ENCODE measurements at regions of chr2 and their contacts with region 1.

Region 1: GRCh38 chr2:184346338-184346862 is 251.9 kb upstream of the ZNF804A start:
- DNase-seq: no peak
- H3K4me3 ChIP-seq: no peak overlapping the region
- H3K27ac ChIP-seq: no peak overlapping the region
- H3K4me1 ChIP-seq: no peaks in the 10 kb centered on the region
- H3K27me3 ChIP-seq: no peaks in the 10 kb centered on the region
- CTCF ChIP-seq: no peak
- EP300 ChIP-seq: no peak
- POLR2A ChIP-seq: no peak

Region 2: GRCh38 chr2:183207110-183207509 is 1139.3 kb before region 1 on chr2:
- in situ Hi-C with region 1: no loop called
- intact Hi-C with region 1: loop called (anchors 5 kb)
- DNase-seq: no peak
- H3K4me3 ChIP-seq: no peak overlapping the region
- H3K27ac ChIP-seq: no peak overlapping the region
- H3K4me1 ChIP-seq: no peaks in the 10 kb centered on the region
- H3K27me3 ChIP-seq: no peaks in the 10 kb centered on the region
- CTCF ChIP-seq: no peak
- EP300 ChIP-seq: no peak
- POLR2A ChIP-seq: no peak

Region 3: GRCh38 chr2:185108588-185108987 is 762.2 kb after region 1 on chr2:
- in situ Hi-C with region 1: no loop called
- intact Hi-C with region 1: no loop called
- DNase-seq: no peak
- H3K4me3 ChIP-seq: no peak overlapping the region
- H3K27ac ChIP-seq: no peak overlapping the region
- H3K4me1 ChIP-seq: no peaks in the 10 kb centered on the region
- H3K27me3 ChIP-seq: no peaks in the 10 kb centered on the region
- CTCF ChIP-seq: no peak
- EP300 ChIP-seq: no peak
- POLR2A ChIP-seq: no peak